ENCODE measurements at regions of chr17 and their contacts with region 1.

Region 1: GRCh38 chr17:48944519-48945260 is at the start of gene SNF8:
- DNase-seq: peak; percentile 95
- H3K4me3 Mint-ChIP-seq: peak within 1 kb of the TSS; percentile 97
- H3K27ac Mint-ChIP-seq: peak within 1 kb of the TSS; percentile 95
- H3K4me1 Mint-ChIP-seq: peaks cover 23% of the 10 kb centered on the region
- H3K27me3 Mint-ChIP-seq: peaks cover 2% of the 10 kb centered on the region
- total RNA-seq, gene SNF8: 94.9 to 97.9 TPM

Region 2: GRCh38 chr17:48908047-48908843 is 36.4 kb before region 1 on chr17 and contains the start of gene UBE2Z:
- CTCF ChIA-PET with region 1: no interaction called
- POLR2A ChIA-PET with region 1: interaction called, 57 read pairs
- DNase-seq: peak; percentile 90
- H3K4me3 Mint-ChIP-seq: peak within 1 kb of the TSS; percentile 85
- H3K27ac Mint-ChIP-seq: peak within 1 kb of the TSS; percentile 89
- H3K4me1 Mint-ChIP-seq: peaks cover 50% of the 10 kb centered on the region
- H3K27me3 Mint-ChIP-seq: no peaks in the 10 kb centered on the region
- total RNA-seq, gene UBE2Z: 83.3 to 85.1 TPM

Region 3: DNA sequence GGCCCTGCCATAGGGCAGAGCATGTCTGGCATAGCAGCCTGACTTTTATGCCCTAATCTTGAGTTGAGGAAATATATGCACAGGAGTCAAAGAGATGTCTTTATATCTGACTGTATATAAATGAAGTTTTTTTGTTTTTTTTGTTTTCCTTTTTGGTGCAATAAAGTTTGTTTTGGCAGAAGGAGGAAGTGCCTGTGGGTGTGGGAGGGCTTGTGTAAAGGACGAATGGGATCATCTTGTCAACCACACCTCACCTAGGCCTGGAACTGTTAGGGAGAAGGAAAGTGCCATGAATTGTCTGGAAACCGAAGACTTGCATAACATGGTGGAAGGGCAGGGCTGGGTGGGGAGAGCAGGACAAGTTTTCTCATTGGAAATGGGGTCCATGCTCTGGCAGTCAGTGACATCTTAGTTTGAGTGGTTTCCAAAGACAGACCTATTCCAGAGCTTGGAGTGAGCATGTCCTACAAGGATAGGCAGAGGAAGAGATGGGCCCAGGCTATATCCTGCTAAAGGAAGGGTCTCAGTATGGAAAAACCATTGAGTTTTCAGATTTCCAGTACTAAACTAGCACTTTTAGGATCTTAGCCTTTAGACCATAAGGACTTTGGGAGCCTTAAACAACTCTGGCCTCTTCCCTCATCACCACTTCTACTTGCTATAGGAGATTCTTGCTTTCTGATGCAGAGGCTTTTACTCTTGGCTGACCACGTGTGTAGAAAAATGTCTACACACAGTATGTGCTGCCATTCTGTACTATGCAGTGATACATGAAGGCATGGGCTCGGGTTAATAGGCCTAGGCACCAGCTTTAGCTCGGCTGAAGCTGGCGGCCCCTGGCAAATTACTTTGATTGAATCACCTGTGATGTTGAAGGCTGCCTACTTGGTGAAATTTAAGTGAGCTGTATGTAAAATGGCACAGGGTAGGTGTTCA is 15.5 kb before region 1 on chr17:
- CTCF ChIA-PET with region 1: interaction called, 3 read pairs
- POLR2A ChIA-PET with region 1: interaction called, 15 read pairs
- DNase-seq: no peak
- H3K4me3 Mint-ChIP-seq: no peak overlapping the region
- H3K27ac Mint-ChIP-seq: peak overlapping the region; percentile 32
- H3K4me1 Mint-ChIP-seq: peaks cover 5% of the 10 kb centered on the region
- H3K27me3 Mint-ChIP-seq: no peaks in the 10 kb centered on the region

Measured in activated CD4-positive, alpha-beta memory T cell treated with anti-CD3 and anti-CD28 coated beads, Interleukin-2, amount 10 ng/mL, durations not matched to agents 7 days and 5 days (primary cell).